Endothelial cell of umbilical vein (primary cell): ENCODE measurements at regions of chr1 and their contacts with region 1.

Region 1: DNA sequence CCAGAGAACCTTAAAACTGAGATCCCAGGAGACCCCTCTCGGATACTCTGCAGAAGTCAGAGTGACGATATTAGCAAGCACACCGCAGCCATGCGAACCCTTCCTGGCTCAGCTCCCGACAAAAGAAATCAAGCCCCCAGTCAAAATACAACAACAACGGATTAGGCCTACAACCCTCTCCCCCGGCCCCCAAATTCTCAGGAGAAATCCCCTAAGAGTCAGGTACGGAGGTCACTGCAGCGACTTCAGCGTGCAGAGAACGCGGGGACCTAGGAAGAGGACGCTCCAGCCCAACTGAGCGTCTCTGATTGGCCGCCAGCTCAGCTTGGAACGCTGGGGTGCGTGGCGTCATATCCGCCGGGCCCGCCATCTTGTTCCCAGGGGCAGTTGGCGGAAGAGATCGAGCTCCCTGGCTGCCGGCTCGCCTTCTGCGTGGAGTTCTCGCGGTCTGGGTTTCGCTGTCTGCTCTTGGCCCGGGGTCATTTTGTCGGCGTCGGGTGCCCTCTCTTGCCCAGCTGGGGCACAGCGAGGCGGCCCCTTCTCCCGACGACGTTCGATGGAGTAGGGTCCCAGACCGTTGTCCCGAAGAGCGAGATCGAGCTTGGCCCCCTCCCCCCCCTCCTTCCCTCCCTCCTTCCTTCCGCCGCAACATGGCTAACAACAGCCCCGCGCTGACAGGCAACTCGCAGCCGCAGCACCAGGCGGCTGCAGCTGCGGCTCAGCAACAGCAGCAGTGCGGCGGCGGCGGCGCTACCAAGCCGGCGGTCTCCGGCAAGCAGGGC is at the start of gene PRPF38B:
- DNase-seq: peak; percentile 93
- H3K4me3 ChIP-seq: peak within 1 kb of the TSS; percentile 83 to 94 (median 89)
- H3K27ac ChIP-seq: peak within 1 kb of the TSS; percentile 94
- H3K4me1 ChIP-seq: peaks cover 23% of the 10 kb centered on the region
- H3K27me3 ChIP-seq: no peaks in the 10 kb centered on the region
- CTCF ChIP-seq: no peak
- POLR2A ChIP-seq: peak; percentile 97
- total RNA-seq, gene PRPF38B: 40.5 and 46.6 TPM in 2 replicates

Region 2: DNA sequence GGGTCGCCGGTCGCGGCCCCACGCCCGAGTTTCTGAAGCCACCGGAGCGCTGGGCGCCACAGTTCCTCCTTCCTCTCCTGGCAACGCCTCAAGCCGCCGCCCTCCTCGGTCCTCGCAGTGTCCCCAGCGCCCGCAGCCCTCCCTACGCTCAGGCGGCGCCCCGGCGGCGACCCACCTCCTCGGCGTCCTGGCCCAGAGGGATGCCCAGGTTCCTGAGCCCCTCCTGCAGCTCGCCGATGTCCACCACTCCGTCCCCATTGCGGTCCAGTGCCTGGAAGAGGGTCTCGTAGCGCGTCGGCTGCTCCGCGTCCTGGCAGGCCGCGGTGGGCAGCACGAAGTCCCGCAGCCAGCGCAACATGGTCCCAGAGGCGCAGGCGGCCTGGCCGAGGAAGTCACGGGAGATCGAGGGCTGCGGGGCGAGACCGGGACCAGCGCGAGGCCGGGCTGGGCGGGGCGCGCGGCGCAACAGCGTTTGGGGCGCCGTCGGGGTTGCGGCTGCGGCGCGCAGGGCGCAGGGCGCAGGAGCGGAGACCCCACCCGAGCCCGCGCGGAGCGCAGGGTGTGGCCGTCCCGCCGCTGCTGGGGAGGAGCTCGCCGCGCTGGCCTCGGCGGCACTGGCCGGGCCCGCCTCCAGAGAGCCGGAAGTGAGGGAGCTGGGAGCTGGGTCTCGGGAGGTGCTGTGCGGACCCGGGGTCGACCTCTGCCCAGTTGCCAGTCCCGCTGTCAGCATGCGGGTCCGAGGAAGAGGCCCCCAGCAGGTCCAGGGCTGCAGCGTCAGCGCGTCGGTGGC is 492.2 kb before region 1 on chr1 and contains the start of gene SLC25A24:
- CTCF ChIA-PET with region 1: no interaction called
- POLR2A ChIA-PET with region 1: no interaction called
- dilution Hi-C with region 1: no loop called
- intact Hi-C with region 1: loop called (anchors 1 kb)
- DNase-seq: peak; percentile 73
- H3K4me3 ChIP-seq: peak within 1 kb of the TSS; percentile 84 to 95 (median 87)
- H3K27ac ChIP-seq: peak within 1 kb of the TSS; percentile 93
- H3K4me1 ChIP-seq: peaks cover 23% of the 10 kb centered on the region
- H3K27me3 ChIP-seq: no peaks in the 10 kb centered on the region
- CTCF ChIP-seq: no peak
- POLR2A ChIP-seq: no peak
- total RNA-seq, gene SLC25A24: 44.5 and 45.8 TPM in 2 replicates

Region 3: DNA sequence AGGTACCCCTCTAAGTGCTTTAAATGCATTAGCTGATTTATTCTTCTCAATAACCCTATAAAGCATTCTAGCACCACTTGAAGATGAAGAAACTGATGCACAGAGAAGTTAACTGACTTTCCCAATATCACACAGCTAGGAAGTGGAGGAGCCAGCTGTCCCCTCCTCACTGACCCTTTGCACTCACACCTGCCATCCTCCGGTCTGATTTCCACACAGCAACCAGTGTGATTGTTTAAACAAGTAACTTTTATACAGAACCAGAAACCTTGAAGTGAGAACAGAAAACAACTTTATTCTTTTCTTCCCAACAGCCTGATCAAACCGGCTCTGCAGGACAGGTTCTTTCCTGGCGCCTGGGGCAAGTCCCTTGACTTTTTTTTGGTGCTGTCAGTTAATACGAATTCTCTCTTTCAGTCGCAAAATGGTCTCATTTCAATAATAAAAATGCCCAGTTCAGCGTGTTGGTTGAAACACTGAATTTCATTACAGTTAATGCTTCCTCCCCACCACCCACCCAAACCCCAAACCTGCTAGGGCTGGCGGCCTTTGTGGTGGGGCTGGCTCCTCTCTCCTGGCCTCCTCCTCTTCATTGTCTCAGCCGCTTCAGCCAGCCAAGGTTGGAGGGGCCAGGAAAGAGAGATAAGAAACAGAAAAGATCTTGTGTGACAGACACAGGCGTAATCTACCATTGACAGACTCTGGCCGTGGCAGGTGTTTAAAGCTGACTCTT is 158.6 kb before region 1 on chr1:
- CTCF ChIA-PET with region 1: no interaction called
- POLR2A ChIA-PET with region 1: no interaction called
- dilution Hi-C with region 1: no loop called
- intact Hi-C with region 1: no loop called
- DNase-seq: no peak
- H3K4me3 ChIP-seq: no peak overlapping the region
- H3K27ac ChIP-seq: no peak overlapping the region
- H3K4me1 ChIP-seq: no peaks in the 10 kb centered on the region
- H3K27me3 ChIP-seq: peaks cover 2 to 4% of the 10 kb centered on the region in 2 experiments
- CTCF ChIP-seq: no peak
- POLR2A ChIP-seq: no peak

Region 4: DNA sequence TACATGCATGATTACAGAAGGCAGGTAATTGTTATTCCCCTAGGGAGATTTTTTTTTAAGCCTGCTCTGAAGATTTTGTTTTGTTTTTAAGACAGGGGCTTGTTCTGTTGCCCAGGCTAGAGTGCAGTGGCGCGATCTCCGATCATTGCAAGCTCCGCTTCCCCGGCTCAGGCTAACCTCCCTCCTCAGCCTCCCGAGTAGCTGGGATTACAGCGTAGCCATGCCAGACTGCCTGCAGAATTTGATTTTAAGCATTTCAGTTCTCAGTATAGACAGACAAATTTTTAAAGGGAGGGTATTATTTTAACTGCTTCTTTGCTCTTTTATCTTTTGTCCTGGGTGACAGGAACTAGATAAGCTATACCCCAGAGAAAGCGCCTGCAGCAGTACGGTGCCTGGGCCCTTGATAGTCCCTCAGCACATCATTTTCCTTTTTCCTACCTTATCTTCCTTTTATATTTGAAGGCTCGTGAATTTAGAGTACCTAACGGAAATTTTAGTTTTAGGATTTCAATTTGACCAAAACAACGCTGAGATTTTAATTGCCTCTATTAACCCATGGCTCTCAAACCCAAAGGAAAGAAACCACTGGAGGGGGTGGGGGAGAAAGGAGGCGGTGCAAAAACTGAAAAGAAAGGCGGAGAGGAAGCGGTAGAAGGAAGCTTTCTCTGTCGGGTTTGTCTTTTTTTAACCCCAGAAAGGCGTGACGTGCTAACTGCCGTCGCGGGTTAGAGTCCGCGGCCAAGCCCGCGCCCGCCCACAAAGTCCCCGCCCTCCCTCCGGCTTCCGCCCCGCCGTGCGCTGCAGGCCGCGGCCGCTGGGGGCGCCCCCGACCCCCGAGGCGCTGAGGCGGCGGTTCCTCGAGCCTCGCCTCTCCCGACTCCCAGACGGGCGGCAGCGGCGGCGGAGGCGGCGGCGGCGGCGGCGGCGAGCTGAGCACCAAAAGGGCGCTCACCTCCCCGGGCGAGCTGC is 132.6 kb before region 1 on chr1 and contains the start of gene EEIG2:
- CTCF ChIA-PET with region 1: interaction called, 13 read pairs
- POLR2A ChIA-PET with region 1: no interaction called
- dilution Hi-C with region 1: no loop called
- intact Hi-C with region 1: no loop called
- DNase-seq: peak; percentile 88
- H3K4me3 ChIP-seq: peak within 1 kb of the TSS; percentile 45 to 76 (median 53)
- H3K27ac ChIP-seq: peak within 1 kb of the TSS; percentile 33
- H3K4me1 ChIP-seq: peaks cover 25% of the 10 kb centered on the region
- H3K27me3 ChIP-seq: peaks cover 3 to 11% of the 10 kb centered on the region in 2 experiments
- CTCF ChIP-seq: peak; percentile 64 to 78
- POLR2A ChIP-seq: peak; percentile 41
- total RNA-seq, gene EEIG2: 7.2 and 8.7 TPM in 2 replicates

Region 5: GRCh38 chr1:108661030-108661620 is 31.0 kb before region 1 on chr1 and contains the start of gene HENMT1:
- CTCF ChIA-PET with region 1: interaction called, 5 read pairs
- POLR2A ChIA-PET with region 1: interaction called, 7 read pairs
- dilution Hi-C with region 1: no loop called
- intact Hi-C with region 1: loop called (anchors 1 kb)
- DNase-seq: peak; percentile 85
- H3K4me3 ChIP-seq: peak within 1 kb of the TSS; percentile 39 to 64 (median 45)
- H3K27ac ChIP-seq: peak within 1 kb of the TSS; percentile 88
- H3K4me1 ChIP-seq: peaks cover 7% of the 10 kb centered on the region
- H3K27me3 ChIP-seq: no peaks in the 10 kb centered on the region
- CTCF ChIP-seq: no peak
- POLR2A ChIP-seq: no peak
- total RNA-seq, gene HENMT1: 3.8 and 4.4 TPM in 2 replicates

Region 6: GRCh38 chr1:108746372-108747205 is 54.5 kb after region 1 on chr1 and contains the start of gene STXBP3:
- CTCF ChIA-PET with region 1: interaction called, 5 read pairs
- POLR2A ChIA-PET with region 1: interaction called, 4 read pairs
- dilution Hi-C with region 1: no loop called
- intact Hi-C with region 1: loop called (anchors 1 kb)
- DNase-seq: peak; percentile 99
- H3K4me3 ChIP-seq: peak within 1 kb of the TSS; percentile 67 to 95 (median 93)
- H3K27ac ChIP-seq: peak within 1 kb of the TSS; percentile 89
- H3K4me1 ChIP-seq: peaks cover 15% of the 10 kb centered on the region
- H3K27me3 ChIP-seq: peaks cover 4 to 6% of the 10 kb centered on the region in 2 experiments
- CTCF ChIP-seq: peak; percentile 98 to 100
- POLR2A ChIP-seq: peak; percentile 97
- total RNA-seq, gene STXBP3: 37.2 and 44.1 TPM in 2 replicates

Region 7: DNA sequence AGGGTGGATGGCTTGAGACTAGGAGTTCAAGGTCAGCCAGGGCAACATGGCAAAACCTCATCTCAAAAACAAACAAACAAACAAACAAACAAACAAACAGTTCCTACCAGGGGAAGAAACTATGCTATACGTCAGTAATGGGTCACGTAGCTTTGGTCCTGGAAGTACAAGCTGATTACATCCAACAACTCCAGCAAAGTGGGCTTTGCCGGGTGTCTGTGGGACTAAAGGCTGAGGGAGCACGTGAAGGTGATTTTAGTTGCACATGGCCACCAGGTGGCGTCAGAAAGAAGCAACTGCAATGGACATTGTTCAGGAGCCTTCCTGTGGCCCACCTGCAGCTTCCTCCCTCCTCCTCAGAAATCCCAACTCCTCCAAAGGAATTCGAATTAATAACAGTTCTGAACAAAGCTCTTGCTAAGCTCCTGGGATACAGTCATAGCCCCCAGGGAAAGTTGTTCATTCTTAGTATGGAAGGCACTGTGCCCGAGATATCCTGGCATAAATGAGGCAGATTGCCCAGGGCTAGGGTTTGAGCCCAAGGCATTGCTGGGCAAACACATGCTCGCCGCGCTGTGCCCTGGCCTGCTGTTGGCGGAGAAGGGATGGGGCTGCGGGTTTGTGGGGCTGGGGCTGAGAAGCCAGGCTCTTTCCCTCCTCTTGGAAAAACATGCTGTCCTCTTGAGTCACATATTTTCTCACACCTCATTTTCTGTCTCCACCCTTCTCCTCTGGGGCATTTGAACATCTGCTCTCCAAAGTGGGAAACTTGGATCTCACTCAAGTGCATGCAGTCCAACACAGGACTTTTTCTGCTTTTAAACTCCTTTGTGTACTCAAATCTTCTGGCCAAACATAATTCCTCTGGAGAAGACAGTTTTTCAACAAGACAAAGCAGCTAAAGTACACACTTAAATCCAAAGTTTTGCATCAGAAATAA is 136.2 kb after region 1 on chr1:
- CTCF ChIA-PET with region 1: no interaction called
- POLR2A ChIA-PET with region 1: no interaction called
- dilution Hi-C with region 1: no loop called
- intact Hi-C with region 1: loop called (anchors 2 kb)
- DNase-seq: peak; percentile 70
- H3K4me3 ChIP-seq: no peak overlapping the region
- H3K27ac ChIP-seq: no peak overlapping the region
- H3K4me1 ChIP-seq: peaks cover 29% of the 10 kb centered on the region
- H3K27me3 ChIP-seq: peaks cover 0 to under 1% of the 10 kb centered on the region in 2 experiments
- CTCF ChIP-seq: peak; percentile 64 to 74
- POLR2A ChIP-seq: no peak

Region 8: DNA sequence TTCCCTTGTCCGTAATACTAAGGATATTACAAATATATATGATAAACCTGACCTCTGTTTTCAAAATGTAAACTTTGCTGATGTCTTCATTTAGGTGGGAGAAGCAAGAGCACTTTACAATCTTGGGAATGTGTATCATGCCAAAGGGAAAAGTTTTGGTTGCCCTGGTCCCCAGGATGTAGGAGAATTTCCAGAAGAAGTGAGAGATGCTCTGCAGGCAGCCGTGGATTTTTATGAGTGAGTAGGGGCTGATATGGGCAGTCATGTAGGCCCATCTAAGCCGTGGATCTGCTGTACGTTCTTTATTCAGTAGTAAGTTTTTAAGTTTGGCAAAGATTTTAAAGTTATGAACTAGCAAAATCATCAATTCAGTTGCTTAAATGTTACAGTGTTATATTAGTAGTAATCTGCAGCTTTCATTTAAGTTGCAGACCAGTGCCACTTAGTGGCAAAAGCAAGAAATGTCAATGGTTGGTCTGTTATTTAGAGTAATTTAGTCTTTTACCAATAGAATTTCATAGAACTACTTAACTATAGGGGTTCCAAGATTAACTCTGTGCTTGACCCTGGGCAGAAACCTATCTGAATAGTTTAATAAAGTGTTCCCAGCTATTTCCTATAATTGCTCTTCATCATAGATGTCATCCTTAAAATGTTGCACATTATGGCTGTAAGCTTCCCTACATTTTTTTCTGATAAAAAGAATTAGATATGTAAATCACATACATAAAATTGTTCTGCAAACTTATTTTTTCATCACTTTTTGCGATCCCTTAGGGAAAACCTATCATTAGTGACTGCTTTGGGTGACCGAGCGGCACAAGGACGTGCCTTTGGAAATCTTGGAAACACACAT is 206.0 kb after region 1 on chr1:
- CTCF ChIA-PET with region 1: interaction called, 9 read pairs
- POLR2A ChIA-PET with region 1: no interaction called
- dilution Hi-C with region 1: no loop called
- intact Hi-C with region 1: loop called (anchors 1 kb)
- DNase-seq: peak; percentile 66
- H3K4me3 ChIP-seq: no peak overlapping the region
- H3K27ac ChIP-seq: no peak overlapping the region
- H3K4me1 ChIP-seq: peaks cover 4% of the 10 kb centered on the region
- H3K27me3 ChIP-seq: no peaks in the 10 kb centered on the region
- CTCF ChIP-seq: peak; percentile 36 to 45
- POLR2A ChIP-seq: no peak